CD4-positive, alpha-beta memory T cell (primary cell): ENCODE measurements at regions of chr6 and their contacts with region 1.

Region 1: DNA sequence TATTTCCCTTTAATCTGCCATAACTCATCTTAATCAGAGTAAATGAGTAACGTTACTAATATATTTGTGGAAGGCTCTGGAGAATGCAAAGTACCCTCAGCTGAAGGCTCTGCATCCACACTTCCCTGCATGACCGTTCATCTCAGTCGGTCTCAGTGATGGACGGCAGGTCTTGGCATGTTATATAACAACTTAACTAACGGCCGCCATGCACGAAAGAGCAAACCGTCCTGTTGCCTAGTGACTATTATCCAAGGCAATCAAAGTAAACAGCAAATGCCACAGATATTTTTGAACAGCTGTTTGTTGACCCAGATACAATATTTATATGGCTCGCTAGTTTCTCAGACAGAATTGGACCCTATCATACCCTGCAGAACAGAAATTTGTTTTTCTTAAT is 194.9 kb upstream of the SMLR1 start:
- DNase-seq: no peak
- H3K4me3 ChIP-seq: no peak overlapping the region
- H3K4me3 Mint-ChIP-seq: no peak overlapping the region
- H3K27ac ChIP-seq: no peak overlapping the region
- H3K27ac Mint-ChIP-seq: no peak overlapping the region
- H3K4me1 ChIP-seq: no peaks in the 10 kb centered on the region
- H3K4me1 Mint-ChIP-seq: peaks cover 0 to 3% (median 0%) of the 10 kb centered on the region in 4 donors
- H3K27me3 ChIP-seq: no peaks in the 10 kb centered on the region
- H3K27me3 Mint-ChIP-seq: no peaks in the 10 kb centered on the region

Region 2: DNA sequence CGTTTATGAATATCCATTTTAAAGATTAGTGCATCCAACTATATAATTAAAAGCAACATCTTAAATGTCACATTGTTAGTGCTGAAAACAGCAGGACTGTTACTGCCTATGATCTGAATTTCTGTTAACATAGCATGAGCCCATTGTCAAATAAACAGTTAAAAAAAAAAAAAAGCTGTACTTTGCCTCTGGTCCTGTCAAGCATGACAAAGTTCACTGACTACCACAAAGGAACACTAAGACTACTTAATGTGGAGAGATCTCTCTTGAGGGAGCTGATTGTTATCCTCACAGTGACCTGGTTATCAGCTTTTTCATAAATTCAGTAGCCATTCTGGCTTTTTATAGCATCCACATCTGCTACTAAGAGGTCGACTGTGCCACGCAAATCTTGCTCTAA is 38.3 kb before region 1 on chr6:
- CTCF ChIA-PET with region 1: no interaction called
- POLR2A ChIA-PET with region 1: no interaction called
- intact Hi-C with region 1: loop called (anchors 2 kb)
- DNase-seq: no peak
- H3K4me3 ChIP-seq: no peak overlapping the region
- H3K4me3 Mint-ChIP-seq: no peak overlapping the region
- H3K27ac ChIP-seq: no peak overlapping the region
- H3K27ac Mint-ChIP-seq: no peak overlapping the region
- H3K4me1 ChIP-seq: no peaks in the 10 kb centered on the region
- H3K4me1 Mint-ChIP-seq: peaks cover 0 to 5% (median 5%) of the 10 kb centered on the region in 4 donors
- H3K27me3 ChIP-seq: no peaks in the 10 kb centered on the region
- H3K27me3 Mint-ChIP-seq: no peaks in the 10 kb centered on the region

Region 3: DNA sequence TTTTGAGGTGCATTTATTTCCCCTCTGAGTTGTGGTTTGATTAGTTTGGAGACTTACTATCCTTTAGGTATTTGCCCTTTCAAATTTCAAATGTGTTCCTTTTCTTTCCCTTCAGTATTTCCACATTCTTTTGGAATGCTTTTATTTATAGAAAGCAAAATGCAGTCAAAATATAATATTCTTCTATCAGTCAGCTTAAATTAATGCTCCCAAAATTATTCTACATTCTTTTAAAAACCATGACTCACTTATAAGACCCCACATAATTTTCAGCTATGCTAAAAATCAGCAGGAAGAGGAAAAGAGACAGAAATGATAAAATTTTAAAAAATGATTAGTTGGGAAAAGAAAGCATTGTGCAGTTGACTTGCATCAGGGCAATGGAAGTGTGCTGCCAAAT is 15.0 kb after region 1 on chr6:
- CTCF ChIA-PET with region 1: no interaction called
- POLR2A ChIA-PET with region 1: no interaction called
- intact Hi-C with region 1: no loop called
- DNase-seq: no peak
- H3K4me3 ChIP-seq: no peak overlapping the region
- H3K4me3 Mint-ChIP-seq: no peak overlapping the region
- H3K27ac ChIP-seq: no peak overlapping the region
- H3K27ac Mint-ChIP-seq: no peak overlapping the region
- H3K4me1 ChIP-seq: no peaks in the 10 kb centered on the region
- H3K4me1 Mint-ChIP-seq: peaks cover 0 to 4% (median 0%) of the 10 kb centered on the region in 4 donors
- H3K27me3 ChIP-seq: no peaks in the 10 kb centered on the region
- H3K27me3 Mint-ChIP-seq: no peaks in the 10 kb centered on the region

Region 4: GRCh38 chr6:130882370-130882769 is 250.1 kb after region 1 on chr6:
- CTCF ChIA-PET with region 1: no interaction called
- POLR2A ChIA-PET with region 1: no interaction called
- intact Hi-C with region 1: no loop called
- DNase-seq: no peak
- H3K4me3 ChIP-seq: no peak overlapping the region
- H3K4me3 Mint-ChIP-seq: no peak overlapping the region
- H3K27ac ChIP-seq: no peak overlapping the region
- H3K27ac Mint-ChIP-seq: no peak overlapping the region
- H3K4me1 ChIP-seq: no peaks in the 10 kb centered on the region
- H3K4me1 Mint-ChIP-seq: no peaks in the 10 kb centered on the region
- H3K27me3 ChIP-seq: no peaks in the 10 kb centered on the region
- H3K27me3 Mint-ChIP-seq: no peaks in the 10 kb centered on the region

Region 5: DNA sequence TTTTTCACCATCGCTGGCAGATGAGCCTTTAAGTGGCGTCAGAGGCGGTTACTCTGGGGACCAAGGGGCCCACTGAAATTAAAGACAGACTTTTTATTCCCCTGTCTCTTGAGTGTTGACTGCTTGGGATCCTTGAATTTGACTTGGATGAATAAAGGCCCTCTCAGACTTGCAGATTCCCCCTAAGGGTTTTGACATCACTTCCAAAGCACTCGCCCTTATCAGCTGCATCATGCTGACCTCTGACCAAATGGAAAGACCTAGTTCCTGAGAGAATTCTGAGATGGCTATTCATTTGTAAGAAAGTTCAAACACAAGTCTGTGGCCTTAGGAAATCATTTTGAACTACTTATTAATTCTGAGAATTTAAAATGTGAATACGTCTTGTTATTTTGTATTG is 1782.5 kb after region 1 on chr6:
- CTCF ChIA-PET with region 1: no interaction called
- POLR2A ChIA-PET with region 1: no interaction called
- intact Hi-C with region 1: no loop called
- DNase-seq: no peak
- H3K4me3 ChIP-seq: no peak overlapping the region
- H3K4me3 Mint-ChIP-seq: no peak overlapping the region
- H3K27ac ChIP-seq: no peak overlapping the region
- H3K27ac Mint-ChIP-seq: no peak overlapping the region
- H3K4me1 ChIP-seq: no peaks in the 10 kb centered on the region
- H3K4me1 Mint-ChIP-seq: no peaks in the 10 kb centered on the region
- H3K27me3 ChIP-seq: no peaks in the 10 kb centered on the region
- H3K27me3 Mint-ChIP-seq: peaks cover 4 to 8% of the 10 kb centered on the region in 2 donors